Activated naive CD4-positive, alpha-beta T cell treated with anti-CD3 and anti-CD28 coated beads for 36 hours (primary cell): ENCODE measurements at regions of chr5 and their contacts with region 1.

Region 1: GRCh38 chr5:107673368-107674136 is 2.8 kb upstream of the EFNA5 start:
- DNase-seq: peak; percentile 88
- H3K4me3 Mint-ChIP-seq: peak overlapping the region; percentile 71
- H3K27ac Mint-ChIP-seq: no peak overlapping the region
- H3K4me1 Mint-ChIP-seq: peaks cover 29% of the 10 kb centered on the region
- H3K27me3 Mint-ChIP-seq: peaks cover 58% of the 10 kb centered on the region

Region 2: DNA sequence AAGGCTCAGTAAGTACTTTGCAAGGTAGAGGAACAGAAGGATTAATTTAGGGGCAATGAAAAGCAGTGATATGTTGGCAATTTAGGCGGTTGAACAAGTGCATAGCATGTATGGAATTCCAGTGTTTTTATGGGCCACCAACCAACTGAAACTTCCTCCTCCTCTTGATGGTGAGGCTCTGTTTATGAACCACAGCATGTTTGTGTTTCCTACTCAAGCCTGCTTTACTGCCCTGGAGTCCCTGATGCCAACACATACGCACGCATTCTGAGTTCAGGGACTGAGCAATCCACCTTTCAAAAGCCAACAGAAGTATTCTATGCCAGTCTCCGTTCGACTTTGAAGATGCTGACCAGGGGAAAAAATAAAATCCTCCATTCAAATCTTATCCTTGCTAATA is 420.3 kb before region 1 on chr5:
- CTCF ChIA-PET with region 1: no interaction called
- intact Hi-C with region 1: no loop called
- DNase-seq: no peak
- H3K4me3 Mint-ChIP-seq: no peak overlapping the region
- H3K27ac Mint-ChIP-seq: no peak overlapping the region
- H3K4me1 Mint-ChIP-seq: no peaks in the 10 kb centered on the region
- H3K27me3 Mint-ChIP-seq: peaks cover 2% of the 10 kb centered on the region

Region 3: DNA sequence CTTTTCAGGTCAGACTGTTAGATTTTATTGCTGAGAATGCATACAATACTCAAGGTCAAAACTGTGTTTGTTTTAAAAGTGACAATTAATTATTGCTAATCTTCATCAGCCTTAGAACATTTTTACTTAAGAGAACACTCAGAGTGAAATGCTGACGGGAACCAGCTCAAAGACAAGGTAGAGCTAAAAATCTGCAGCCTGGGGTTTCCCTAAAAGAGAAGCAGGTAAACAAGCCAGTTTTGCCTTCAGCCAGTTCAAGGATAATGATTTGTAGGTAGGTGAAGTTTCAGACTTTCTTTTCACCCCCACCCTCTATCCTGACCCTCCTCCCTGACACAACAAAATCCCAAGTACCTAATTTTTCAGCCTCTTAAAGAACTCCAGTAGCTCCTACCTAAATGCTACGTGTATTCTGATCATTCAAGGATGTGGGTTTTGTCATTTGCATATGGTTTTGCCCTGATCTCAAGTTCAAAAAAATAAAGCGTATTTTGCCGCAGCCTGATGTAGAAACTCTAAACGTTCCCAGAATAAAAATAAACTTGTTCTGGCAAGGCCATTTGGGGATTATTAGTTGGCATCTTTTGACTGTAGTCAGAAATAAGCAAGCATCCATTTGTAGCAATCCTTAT is 410.0 kb before region 1 on chr5:
- CTCF ChIA-PET with region 1: no interaction called
- intact Hi-C with region 1: loop called (anchors 5 kb)
- DNase-seq: peak; percentile 6
- H3K4me3 Mint-ChIP-seq: no peak overlapping the region
- H3K27ac Mint-ChIP-seq: peak overlapping the region; percentile 7
- H3K4me1 Mint-ChIP-seq: peaks cover 6% of the 10 kb centered on the region
- H3K27me3 Mint-ChIP-seq: peaks cover 6% of the 10 kb centered on the region

Region 4: DNA sequence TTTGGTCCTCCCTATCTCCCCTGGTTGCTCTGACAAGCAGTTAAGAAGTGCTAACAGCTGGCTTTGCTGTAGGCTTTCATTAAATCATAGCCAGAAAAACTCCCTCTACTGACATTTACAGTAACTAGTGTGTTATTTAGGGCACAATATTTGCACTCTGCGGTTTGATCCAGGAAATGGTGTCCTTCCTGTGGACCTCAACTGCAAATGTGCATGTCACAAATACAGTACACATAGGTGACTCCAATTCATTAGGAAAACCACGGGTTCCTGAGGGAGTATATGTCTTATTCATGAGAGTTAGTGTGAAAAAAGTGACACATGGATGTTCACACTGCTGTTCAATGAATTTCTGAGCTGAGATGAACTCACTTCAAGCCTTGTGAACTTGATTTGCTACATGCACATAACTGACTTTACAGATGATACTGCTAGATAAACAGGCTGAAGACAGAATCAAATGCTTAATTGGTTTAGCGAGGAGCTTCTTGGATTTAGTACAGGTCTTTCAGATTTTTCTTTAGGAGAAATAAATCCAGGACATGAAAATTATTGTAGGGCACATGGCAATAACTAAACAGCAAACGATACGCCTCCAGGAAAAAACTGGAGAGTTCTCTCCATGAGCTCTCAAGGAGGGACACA is 284.3 kb before region 1 on chr5:
- CTCF ChIA-PET with region 1: no interaction called
- intact Hi-C with region 1: loop called (anchors 2 kb)
- DNase-seq: peak; percentile 19
- H3K4me3 Mint-ChIP-seq: no peak overlapping the region
- H3K27ac Mint-ChIP-seq: no peak overlapping the region
- H3K4me1 Mint-ChIP-seq: peaks cover 18% of the 10 kb centered on the region
- H3K27me3 Mint-ChIP-seq: no peaks in the 10 kb centered on the region

Region 5: DNA sequence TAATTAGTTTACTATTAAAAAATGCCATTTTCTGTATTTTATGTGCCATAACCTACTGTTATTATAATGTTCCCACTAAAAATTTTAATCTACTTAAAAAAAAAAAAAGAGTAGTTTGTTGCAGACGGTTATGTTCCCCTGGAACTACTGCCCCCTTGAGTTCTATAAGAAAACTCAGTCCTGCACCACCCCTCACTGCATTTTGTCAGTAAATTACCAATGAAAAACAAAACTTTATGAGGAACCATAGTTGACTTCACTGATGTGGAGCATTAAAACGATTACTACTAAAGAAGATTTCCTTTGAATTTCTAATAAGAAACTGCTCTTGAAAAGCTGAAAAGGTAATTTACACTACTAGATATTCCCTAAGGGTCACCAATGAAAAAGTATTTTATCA is 419.6 kb after region 1 on chr5:
- CTCF ChIA-PET with region 1: no interaction called
- intact Hi-C with region 1: loop called (anchors 5 kb)
- DNase-seq: no peak
- H3K4me3 Mint-ChIP-seq: no peak overlapping the region
- H3K27ac Mint-ChIP-seq: no peak overlapping the region
- H3K4me1 Mint-ChIP-seq: no peaks in the 10 kb centered on the region
- H3K27me3 Mint-ChIP-seq: no peaks in the 10 kb centered on the region

Region 6: DNA sequence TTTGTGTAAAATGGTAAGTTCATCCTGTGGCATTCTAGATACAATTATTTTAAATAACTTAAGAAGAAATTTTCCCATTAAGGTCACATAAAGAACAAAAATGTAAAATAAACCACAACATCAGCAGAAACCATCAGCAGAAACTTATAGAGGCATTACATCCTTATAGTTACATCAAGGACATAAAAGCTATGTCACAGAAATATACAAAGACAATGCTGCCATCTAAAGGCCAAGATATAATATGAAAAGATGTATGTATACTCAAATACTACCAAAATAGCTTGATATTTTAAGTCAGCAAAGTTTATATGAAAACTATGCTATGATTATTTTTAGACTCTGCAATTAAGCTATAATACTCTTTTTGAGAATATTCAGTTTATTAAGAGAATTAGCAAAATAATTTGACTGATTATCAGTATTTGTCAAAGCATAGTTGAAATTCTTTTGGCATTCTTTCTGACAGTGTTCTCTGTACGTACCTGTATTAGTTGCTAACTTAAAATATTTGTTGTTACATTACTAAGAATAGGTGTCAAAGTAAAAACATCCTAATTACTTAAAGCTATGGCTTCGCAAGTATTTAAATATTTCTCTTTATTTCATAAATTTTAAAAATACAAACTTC is 672.1 kb after region 1 on chr5:
- CTCF ChIA-PET with region 1: no interaction called
- intact Hi-C with region 1: loop called (anchors 5 kb)
- DNase-seq: no peak
- H3K4me3 Mint-ChIP-seq: no peak overlapping the region
- H3K27ac Mint-ChIP-seq: no peak overlapping the region
- H3K4me1 Mint-ChIP-seq: no peaks in the 10 kb centered on the region
- H3K27me3 Mint-ChIP-seq: no peaks in the 10 kb centered on the region